ENCODE measurements at regions of chr5 and their contacts with region 1.

Region 1: DNA sequence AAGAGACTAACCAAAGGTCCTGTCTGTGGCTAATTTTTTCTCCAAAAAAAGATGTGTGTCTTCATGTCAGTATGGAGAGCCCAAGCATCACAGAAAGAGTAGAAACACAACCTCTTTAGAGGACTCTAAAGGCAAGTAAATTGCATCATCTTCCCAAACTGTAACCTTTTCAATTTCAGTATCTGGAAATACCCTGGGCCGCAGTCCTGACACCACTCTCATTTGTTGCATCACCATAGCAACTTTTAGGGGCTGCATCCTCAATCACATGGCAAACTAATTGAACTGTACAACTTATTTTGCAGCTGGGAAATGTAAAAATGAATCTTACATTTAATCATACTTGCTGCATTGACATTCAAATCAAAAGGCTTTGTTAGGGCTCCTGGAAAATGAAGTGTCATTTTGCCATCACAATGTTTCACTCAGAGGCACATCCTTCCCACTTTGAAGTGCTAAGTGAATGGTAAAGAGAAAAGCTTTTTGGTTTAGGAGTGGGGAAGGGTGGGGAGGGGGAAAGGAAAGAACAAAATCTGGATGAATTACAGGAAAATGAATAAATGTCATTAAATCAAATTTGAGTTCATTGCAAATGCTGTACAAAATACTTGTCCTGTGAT is 60.6 kb upstream of the GRIA1 start:
- DNase-seq: no peak
- H3K4me3 ChIP-seq: no peak overlapping the region
- H3K27ac ChIP-seq: no peak overlapping the region
- H3K4me1 ChIP-seq: peaks cover 0 to 5% (median 2%) of the 10 kb centered on the region in 4 experiments; a peak in 3 of 7 replicates
- H3K27me3 ChIP-seq: no peaks in the 10 kb centered on the region
- CTCF ChIP-seq: no peak
- EP300 ChIP-seq: no peak
- POLR2A ChIP-seq: no peak
- RAD21 ChIP-seq: no peak

Region 2: GRCh38 chr5:153067869-153068268 is 362.0 kb before region 1 on chr5:
- CTCF ChIA-PET with region 1: no interaction called
- POLR2A ChIA-PET with region 1: no interaction called
- DNase-seq: no peak
- H3K4me3 ChIP-seq: no peak overlapping the region
- H3K27ac ChIP-seq: no peak overlapping the region
- H3K4me1 ChIP-seq: no peaks in the 10 kb centered on the region
- H3K27me3 ChIP-seq: no peaks in the 10 kb centered on the region
- CTCF ChIP-seq: peak in 2 of 3 experiments; percentile 20 to 24; a peak in 2 of 4 replicates
- EP300 ChIP-seq: no peak
- POLR2A ChIP-seq: no peak
- RAD21 ChIP-seq: peak; percentile 50 to 67

Region 3: GRCh38 chr5:153445851-153446579 is 16.1 kb after region 1 on chr5:
- CTCF ChIA-PET with region 1: interaction called, 13 read pairs
- POLR2A ChIA-PET with region 1: no interaction called
- DNase-seq: no peak
- H3K4me3 ChIP-seq: no peak overlapping the region
- H3K27ac ChIP-seq: no peak overlapping the region
- H3K4me1 ChIP-seq: no peaks in the 10 kb centered on the region
- H3K27me3 ChIP-seq: no peaks in the 10 kb centered on the region
- CTCF ChIP-seq: no peak
- EP300 ChIP-seq: no peak
- POLR2A ChIP-seq: no peak
- RAD21 ChIP-seq: peak in 1 of 2 experiments; percentile 24; a peak in 1 of 4 replicates

Region 4: DNA sequence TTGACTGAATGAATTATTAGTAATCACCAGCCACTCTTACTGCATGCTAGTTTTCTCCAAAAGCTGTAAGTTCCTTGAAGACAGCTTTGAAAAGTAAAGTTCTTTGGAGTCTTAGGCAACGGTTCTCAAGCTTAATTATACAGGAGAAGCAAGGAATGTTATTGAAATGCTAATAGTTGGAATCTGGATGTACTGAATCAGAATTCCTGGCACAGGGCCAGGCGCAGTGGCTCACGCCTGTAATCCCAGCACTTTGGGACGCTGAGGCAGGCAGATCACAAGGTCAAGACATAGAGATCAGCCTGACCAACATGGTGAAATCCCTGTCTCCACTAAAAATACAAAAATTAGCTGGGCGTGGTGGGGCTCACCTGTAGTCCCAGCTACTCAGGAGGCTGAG is 94.0 kb after region 1 on chr5:
- CTCF ChIA-PET with region 1: no interaction called
- POLR2A ChIA-PET with region 1: no interaction called
- DNase-seq: no peak
- H3K4me3 ChIP-seq: no peak overlapping the region
- H3K27ac ChIP-seq: no peak overlapping the region
- H3K4me1 ChIP-seq: peaks cover 0 to 6% (median 2%) of the 10 kb centered on the region in 4 experiments; a peak in 4 of 7 replicates
- H3K27me3 ChIP-seq: no peaks in the 10 kb centered on the region
- CTCF ChIP-seq: no peak
- EP300 ChIP-seq: no peak
- POLR2A ChIP-seq: no peak
- RAD21 ChIP-seq: no peak

Measured in H1 (cell line).